ENCODE measurements at regions of chr10 and their contacts with region 1.

Region 1: GRCh38 chr10:8404391-8405120 is 350.1 kb downstream of the GATA3 start:
- DNase-seq: peak; percentile 63
- H3K4me3 Mint-ChIP-seq: peak overlapping the region; percentile 75
- H3K27ac Mint-ChIP-seq: peak overlapping the region; percentile 98
- H3K4me1 Mint-ChIP-seq: peaks cover 80% of the 10 kb centered on the region
- H3K27me3 Mint-ChIP-seq: no peaks in the 10 kb centered on the region

Region 2: DNA sequence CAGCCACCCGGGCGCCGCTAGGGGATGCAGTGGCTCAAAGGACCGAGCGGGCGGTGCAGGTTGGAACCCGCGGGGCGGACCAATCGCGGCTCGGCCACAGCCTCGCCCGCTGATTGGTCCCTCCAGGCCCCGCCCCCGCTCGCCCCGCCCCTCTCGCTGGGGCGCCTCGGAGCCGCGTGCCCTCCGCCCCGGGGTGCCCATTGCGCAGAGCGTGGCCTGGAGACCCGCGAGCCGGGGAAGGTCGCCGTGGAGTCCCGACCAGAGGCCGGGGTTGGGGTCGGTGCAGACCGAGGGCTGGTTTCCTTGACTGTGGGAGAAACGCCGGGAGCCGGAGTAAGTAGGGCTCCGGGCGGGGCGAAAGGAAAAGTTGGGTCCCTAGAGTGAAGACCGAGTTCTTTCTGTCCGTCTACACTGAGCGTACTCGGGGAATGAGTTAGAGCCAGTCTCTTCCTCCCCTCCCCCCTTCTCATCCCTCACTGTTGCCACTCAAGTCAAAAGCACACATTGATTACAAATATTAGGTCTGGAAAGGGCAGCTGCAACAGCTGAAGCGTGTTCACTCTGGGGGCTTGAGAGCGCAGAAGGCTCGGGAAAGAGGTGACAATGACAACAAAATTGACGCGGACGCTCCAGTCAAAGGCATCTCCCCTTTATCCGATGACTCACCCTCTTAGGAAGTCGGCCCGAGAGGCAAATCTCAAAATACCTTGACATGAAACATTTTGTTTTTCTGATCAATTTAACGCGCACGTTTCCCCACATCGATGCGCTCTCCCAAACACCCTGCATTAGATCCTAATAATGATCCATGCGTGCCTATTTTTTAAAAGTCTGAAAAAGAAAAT is 350.9 kb before region 1 on chr10:
- intact Hi-C with region 1: loop called (anchors 5 kb)
- DNase-seq: peak; percentile 89
- H3K4me3 Mint-ChIP-seq: peak overlapping the region; percentile 89
- H3K27ac Mint-ChIP-seq: peak overlapping the region; percentile 95
- H3K4me1 Mint-ChIP-seq: peaks cover 13% of the 10 kb centered on the region
- H3K27me3 Mint-ChIP-seq: no peaks in the 10 kb centered on the region

Region 3: DNA sequence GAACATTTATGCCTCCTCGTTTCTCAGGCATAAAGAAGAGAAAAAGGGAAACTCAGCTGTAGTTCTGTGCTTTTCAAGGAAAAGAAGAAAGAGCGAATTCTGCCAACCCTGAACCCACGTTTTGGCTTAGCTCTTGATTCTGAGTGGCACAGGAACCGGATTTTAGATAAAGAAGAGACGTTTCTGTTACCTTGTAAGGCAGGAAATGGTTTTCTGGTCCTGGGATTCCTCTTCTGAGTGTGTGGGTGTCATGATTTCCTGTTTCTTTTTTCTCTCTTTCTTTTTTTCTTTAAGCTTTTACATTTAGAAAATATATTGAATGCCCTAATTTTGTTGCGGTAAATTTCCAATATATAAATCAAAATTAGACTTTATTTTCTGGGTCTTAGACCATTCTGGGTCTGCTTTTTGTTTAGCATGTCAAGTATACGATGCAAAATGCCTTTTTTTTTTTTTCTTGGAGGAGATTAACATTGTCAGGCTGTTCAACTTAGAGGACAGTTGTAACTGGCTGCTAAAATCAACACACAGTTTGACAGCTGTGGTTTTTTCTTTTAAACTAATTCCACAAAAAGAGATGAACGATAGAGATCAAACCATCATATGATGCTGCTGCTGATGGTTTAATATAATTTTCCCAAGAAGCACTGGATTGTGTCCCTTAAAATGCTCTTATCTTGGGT is 159.3 kb before region 1 on chr10:
- intact Hi-C with region 1: loop called (anchors 2 kb)
- DNase-seq: no peak
- H3K4me3 Mint-ChIP-seq: peak overlapping the region; percentile 58
- H3K27ac Mint-ChIP-seq: peak overlapping the region; percentile 93
- H3K4me1 Mint-ChIP-seq: peaks cover 76% of the 10 kb centered on the region
- H3K27me3 Mint-ChIP-seq: no peaks in the 10 kb centered on the region

Region 4: DNA sequence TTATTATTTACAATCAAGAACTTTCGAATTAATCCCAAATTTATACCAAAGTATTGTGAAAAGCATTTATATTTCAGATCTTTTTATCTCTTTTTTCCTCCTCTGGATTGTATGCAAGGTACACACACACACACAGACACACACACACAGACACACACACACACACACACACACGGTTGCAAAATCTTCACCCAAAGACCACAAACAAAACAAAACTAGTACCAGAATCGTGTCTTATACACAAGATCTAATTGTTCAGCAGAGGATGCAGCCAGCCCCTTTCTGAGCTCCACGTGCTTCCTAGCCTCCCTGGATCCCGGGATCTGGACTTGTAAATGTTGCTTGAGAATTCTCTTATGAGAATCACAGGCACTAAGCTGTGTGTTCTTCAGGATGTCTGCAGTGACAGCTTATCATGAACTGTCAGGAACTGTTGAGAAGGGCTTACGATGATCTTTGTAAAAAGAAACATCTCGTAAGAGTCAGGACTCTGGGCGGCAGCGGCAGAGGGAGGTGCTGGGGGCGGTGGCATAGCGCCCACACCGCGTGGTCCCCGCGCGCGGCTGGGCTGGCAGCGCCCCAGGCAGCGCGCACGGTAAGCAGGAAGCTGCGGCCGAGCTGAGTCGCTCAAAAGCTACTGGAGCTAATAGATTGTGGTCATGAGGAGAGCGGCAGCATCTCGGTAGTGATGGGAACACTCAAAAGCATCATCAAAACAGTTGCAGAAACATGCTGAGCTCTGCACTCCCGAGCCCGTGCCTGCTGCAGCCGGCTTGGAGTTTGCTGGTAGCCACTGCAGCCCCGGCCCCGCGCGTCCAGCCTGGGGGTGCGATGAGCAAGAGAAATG is 72.5 kb before region 1 on chr10:
- intact Hi-C with region 1: loop called (anchors 1 kb)
- DNase-seq: peak; percentile 91
- H3K4me3 Mint-ChIP-seq: peak overlapping the region; percentile 90
- H3K27ac Mint-ChIP-seq: peak overlapping the region; percentile 99
- H3K4me1 Mint-ChIP-seq: peaks cover 69% of the 10 kb centered on the region
- H3K27me3 Mint-ChIP-seq: no peaks in the 10 kb centered on the region

Region 5: DNA sequence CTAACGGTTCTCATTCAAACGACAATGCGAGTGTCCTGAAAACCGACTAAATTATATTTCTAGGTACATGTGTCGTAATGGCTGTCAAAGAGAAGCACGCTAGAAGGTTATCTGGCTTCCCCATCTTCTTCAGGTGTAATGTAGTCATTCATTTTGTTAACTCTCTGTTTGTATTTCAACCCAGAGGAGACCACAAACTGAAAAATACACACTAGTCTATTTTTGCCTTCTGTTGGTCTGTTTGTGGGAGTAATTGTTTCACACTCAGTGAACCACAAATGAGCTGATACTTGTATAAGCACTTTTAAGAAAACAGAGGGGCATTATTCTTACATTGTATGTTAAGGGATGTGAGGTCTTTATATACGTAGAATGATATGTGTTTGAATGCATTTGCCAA is 44.2 kb before region 1 on chr10:
- intact Hi-C with region 1: loop called (anchors 1 kb)
- DNase-seq: peak; percentile 37
- H3K4me3 Mint-ChIP-seq: peak overlapping the region; percentile 70
- H3K27ac Mint-ChIP-seq: peak overlapping the region; percentile 88
- H3K4me1 Mint-ChIP-seq: peaks cover 79% of the 10 kb centered on the region
- H3K27me3 Mint-ChIP-seq: no peaks in the 10 kb centered on the region

Region 6: GRCh38 chr10:8577686-8578085 is 173.1 kb after region 1 on chr10:
- intact Hi-C with region 1: loop called (anchors 1 kb)
- DNase-seq: no peak
- H3K4me3 Mint-ChIP-seq: no peak overlapping the region
- H3K27ac Mint-ChIP-seq: peak overlapping the region; percentile 89
- H3K4me1 Mint-ChIP-seq: peaks cover 69% of the 10 kb centered on the region
- H3K27me3 Mint-ChIP-seq: no peaks in the 10 kb centered on the region

Region 7: DNA sequence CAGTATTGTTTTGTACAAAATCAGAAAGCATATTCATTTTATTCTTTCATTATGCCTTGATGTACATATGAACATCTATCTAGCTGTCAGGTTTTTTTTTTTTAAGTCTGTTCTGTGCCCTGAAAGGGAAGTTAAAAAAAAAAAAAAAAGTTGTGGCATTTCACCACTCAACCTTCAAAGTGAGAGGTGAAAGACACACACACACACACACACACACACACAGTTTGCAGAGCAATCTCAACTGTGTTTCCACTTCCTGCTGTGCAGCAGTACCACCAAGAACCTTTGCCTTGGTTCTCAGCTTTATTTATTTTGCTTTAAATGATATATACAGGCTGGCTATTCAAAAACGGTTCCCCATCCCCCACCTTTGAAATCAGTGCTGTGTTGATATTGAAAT is 605.5 kb after region 1 on chr10:
- intact Hi-C with region 1: loop called (anchors 5 kb)
- DNase-seq: peak; percentile 55
- H3K4me3 Mint-ChIP-seq: peak overlapping the region; percentile 5
- H3K27ac Mint-ChIP-seq: peak overlapping the region; percentile 84
- H3K4me1 Mint-ChIP-seq: peaks cover 79% of the 10 kb centered on the region
- H3K27me3 Mint-ChIP-seq: no peaks in the 10 kb centered on the region